Pancreas (tissue), 10 donors: ENCODE measurements at regions of chr11 and their contacts with region 1.

Region 1: GRCh38 chr11:118659314-118659952 is 20.0 kb downstream of the TREH start:
- DNase-seq: peak; percentile 87 to 98 (median 94)
- ATAC-seq: peak; percentile 92 to 97 (median 95)
- H3K4me3 ChIP-seq: peak overlapping the region in 1 of 4 donors; percentile 4
- H3K27ac ChIP-seq: peak overlapping the region in 1 of 4 donors; percentile 24
- H3K4me1 ChIP-seq: peaks cover 0 to 3% (median 3%) of the 10 kb centered on the region in 3 donors
- H3K27me3 ChIP-seq: no peaks in the 10 kb centered on the region
- CTCF ChIP-seq: peak; percentile 96 to 98 (median 97)

Region 2: GRCh38 chr11:118610804-118611795 is 48.3 kb before region 1 on chr11:
- intact Hi-C with region 1: loop called in 1 of 3 experiments (anchors 5 kb)
- DNase-seq: peak; percentile 77 to 98 (median 87)
- ATAC-seq: peak; percentile 64 to 81 (median 76)
- H3K4me3 ChIP-seq: peak overlapping the region; percentile 9 to 54 (median 19)
- H3K27ac ChIP-seq: peak overlapping the region in 1 of 4 donors; percentile 53
- H3K4me1 ChIP-seq: peaks cover 0 to 11% (median 0%) of the 10 kb centered on the region in 3 donors
- H3K27me3 ChIP-seq: no peaks in the 10 kb centered on the region
- CTCF ChIP-seq: peak; percentile 83 to 92 (median 88)

Region 3: DNA sequence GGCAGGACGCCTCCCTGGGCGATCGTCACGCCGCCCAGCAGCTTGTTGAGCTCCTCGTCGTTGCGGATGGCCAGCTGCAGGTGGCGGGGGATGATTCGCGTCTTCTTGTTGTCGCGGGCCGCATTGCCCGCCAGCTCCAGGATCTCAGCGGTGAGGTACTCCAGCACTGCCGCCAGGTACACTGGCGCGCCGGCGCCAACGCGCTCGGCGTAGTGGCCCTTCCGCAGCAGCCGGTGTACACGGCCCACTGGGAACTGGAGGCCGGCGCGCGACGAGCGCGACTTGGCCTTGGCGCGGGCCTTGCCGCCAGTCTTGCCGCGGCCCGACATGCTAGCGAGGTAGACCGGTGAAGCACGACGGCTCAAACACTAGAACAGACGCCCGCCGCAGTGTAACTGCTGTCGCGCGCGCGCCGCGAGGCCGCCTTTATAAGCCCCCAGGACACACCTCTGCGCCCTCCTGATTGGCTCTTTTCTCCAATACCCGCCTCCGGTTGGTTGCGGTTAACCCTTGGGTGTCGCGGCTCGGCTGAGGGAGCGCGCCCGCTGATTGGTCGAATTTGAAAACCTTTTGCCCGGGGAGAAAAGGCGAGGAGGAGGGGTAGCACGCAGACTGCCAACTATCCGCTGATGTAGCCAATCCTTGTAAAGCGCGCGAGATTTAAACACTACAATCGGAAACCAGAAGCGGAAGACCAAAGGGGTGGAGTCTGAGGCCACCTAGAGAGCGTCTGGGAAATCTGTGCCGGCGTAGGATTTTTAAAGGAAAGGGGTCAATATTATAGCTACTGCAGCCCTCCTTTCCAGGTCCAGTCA is 435.8 kb after region 1 on chr11:
- intact Hi-C with region 1: no loop called
- DNase-seq: peak; percentile 97 to 99 (median 99)
- ATAC-seq: peak; percentile 91 to 96 (median 92)
- H3K4me3 ChIP-seq: peak overlapping the region; percentile 60 to 85 (median 78)
- H3K27ac ChIP-seq: peak overlapping the region; percentile 85 to 93 (median 90)
- H3K4me1 ChIP-seq: peaks cover 10 to 20% (median 12%) of the 10 kb centered on the region in 3 donors
- H3K27me3 ChIP-seq: no peaks in the 10 kb centered on the region
- CTCF ChIP-seq: no peak